ENCODE measurements at regions of chr17 and their contacts with region 1.

Region 1: DNA sequence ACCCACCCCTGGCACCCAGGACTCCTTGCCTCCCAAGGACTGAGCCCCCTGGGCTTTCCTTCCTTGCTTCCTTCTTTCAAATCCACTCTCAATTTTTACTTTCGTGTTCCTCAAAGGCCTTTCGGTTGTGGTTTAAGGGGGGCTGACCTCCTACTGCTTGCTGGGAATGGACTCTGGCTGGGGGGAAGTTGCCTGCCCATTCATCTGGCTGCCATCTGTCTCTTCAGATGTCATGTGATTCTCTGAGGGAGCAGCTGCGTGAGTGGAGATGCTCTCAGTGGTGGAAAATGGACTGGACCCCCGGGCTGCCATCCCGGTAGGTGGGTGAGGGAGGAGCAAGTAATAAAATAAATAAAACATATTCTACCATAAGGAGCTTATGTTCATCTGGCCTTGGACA is 93.8 kb upstream of the RPRML start:
- DNase-seq: no peak
- H3K4me3 ChIP-seq: no peak overlapping the region
- H3K27ac ChIP-seq: no peak overlapping the region
- H3K4me1 ChIP-seq: peaks cover 0 to 2% (median 0%) of the 10 kb centered on the region in 4 donors
- H3K27me3 ChIP-seq: no peaks in the 10 kb centered on the region
- CTCF ChIP-seq: no peak
- EP300 ChIP-seq: no peak
- POLR2A ChIP-seq: no peak

Region 2: GRCh38 chr17:47085736-47086135 is 12.8 kb after region 1 on chr17:
- intact Hi-C with region 1: loop called (anchors 1 kb)
- DNase-seq: no peak
- H3K4me3 ChIP-seq: no peak overlapping the region
- H3K27ac ChIP-seq: no peak overlapping the region
- H3K4me1 ChIP-seq: peaks cover 0 to 7% (median 0%) of the 10 kb centered on the region in 4 donors
- H3K27me3 ChIP-seq: no peaks in the 10 kb centered on the region
- CTCF ChIP-seq: no peak
- EP300 ChIP-seq: no peak
- POLR2A ChIP-seq: no peak

Region 3: DNA sequence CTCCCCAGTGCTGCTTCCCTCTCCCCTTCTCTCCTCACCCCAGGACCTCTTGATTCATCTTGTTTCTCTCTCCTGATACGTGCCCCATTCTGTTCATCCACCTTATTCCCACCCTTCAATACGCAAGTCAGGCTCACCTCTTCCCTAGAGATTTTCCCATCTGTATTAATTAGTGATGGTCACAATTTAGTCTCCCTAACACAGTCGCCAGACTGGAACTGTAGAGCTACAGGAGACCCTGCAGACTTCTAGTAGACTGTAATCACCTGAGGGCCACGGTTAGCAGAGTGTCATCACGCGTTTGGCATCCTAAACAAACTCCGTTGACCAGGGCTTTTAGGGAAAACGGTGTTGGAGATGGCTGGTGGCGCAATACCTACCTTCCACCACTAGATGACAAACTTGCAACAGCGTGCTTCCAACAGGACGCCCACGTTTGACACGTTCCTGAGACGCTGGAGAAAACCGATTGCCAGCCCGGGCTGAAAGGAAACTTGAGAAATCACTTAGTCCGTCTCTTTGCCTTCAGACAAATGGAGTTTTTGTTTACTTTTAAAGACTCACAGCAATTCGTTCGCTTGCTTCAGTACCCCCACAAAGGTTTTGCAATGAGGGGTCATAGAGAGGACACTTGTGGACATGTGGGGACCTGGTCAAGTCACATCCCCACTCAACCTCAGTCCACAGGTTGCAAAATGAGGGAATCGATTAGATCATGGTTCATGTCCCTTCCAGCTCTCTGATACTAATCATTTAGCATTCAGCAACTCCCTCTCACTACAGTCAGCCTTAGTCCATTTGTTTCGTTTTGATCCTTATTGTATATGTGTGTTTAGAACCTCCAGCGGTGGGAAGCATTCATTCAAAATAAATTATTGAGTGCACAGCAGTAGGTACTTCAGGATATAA is 156.9 kb after region 1 on chr17:
- intact Hi-C with region 1: no loop called
- DNase-seq: peak; percentile 96
- H3K4me3 ChIP-seq: peak overlapping the region in 3 of 4 donors; percentile 13 to 29 (median 27)
- H3K27ac ChIP-seq: peak overlapping the region; percentile 39 to 69 (median 59)
- H3K4me1 ChIP-seq: peaks cover 0 to 27% (median 23%) of the 10 kb centered on the region in 4 donors
- H3K27me3 ChIP-seq: no peaks in the 10 kb centered on the region
- CTCF ChIP-seq: peak; percentile 99 to 100 (median 99)
- EP300 ChIP-seq: peak in 1 of 4 donors; percentile 18
- POLR2A ChIP-seq: no peak

Region 4: GRCh38 chr17:47239619-47240374 is 166.9 kb after region 1 on chr17:
- intact Hi-C with region 1: no loop called
- DNase-seq: peak; percentile 89
- H3K4me3 ChIP-seq: no peak overlapping the region
- H3K27ac ChIP-seq: peak overlapping the region; percentile 66 to 77 (median 74)
- H3K4me1 ChIP-seq: peaks cover 0 to 17% (median 12%) of the 10 kb centered on the region in 4 donors
- H3K27me3 ChIP-seq: no peaks in the 10 kb centered on the region
- CTCF ChIP-seq: no peak
- EP300 ChIP-seq: peak in 2 of 4 donors; percentile 29 to 47
- POLR2A ChIP-seq: no peak

Measured in sigmoid colon (tissue), 7 donors.